Vagina (tissue), 2 donors: ENCODE measurements at regions of chr20 and their contacts with region 1.

Region 1: DNA sequence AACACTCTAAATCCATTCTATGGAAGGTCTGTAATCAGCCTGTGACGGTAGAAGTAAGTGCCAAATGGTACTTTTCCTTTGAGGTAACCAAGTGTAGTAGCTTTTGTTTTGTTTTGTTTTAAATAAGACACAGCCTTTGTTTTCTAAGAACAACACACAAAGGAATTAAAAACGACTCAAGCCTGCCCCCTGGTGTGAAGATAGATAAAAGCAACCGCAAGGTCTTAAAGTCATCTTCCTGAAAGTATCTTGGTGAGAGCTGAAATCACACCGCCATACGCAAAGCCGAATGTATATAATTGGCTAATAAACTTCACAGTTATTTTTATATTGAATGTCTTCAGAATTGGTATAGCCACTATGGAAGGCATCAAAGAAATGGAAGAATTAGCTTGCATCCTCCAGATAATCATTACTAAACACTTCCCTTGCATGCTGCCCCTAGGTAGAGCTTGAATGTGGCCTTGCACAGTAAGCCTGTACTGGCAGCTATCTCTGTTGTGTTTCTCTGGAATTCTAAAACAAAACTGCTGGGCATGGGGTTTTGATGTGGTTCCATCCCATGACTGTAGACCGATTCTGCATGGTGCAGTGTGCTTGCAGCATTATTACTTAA is 95.6 kb downstream of the LAMP5 start:
- DNase-seq: no peak
- H3K4me3 ChIP-seq: no peak overlapping the region
- H3K27ac ChIP-seq: no peak overlapping the region
- H3K4me1 ChIP-seq: no peaks in the 10 kb centered on the region
- H3K27me3 ChIP-seq: no peaks in the 10 kb centered on the region
- CTCF ChIP-seq: peak; percentile 62 to 75 (median 71)
- POLR2A ChIP-seq: no peak

Region 2: GRCh38 chr20:9363673-9364072 is 246.3 kb before region 1 on chr20:
- intact Hi-C with region 1: no loop called
- DNase-seq: no peak
- H3K4me3 ChIP-seq: no peak overlapping the region
- H3K27ac ChIP-seq: no peak overlapping the region
- H3K4me1 ChIP-seq: peaks cover 14% of the 10 kb centered on the region
- H3K27me3 ChIP-seq: no peaks in the 10 kb centered on the region
- CTCF ChIP-seq: no peak
- POLR2A ChIP-seq: no peak

Region 3: GRCh38 chr20:9407805-9408421 is 202.1 kb before region 1 on chr20:
- intact Hi-C with region 1: loop called (anchors 2 kb)
- DNase-seq: no peak
- H3K4me3 ChIP-seq: no peak overlapping the region
- H3K27ac ChIP-seq: no peak overlapping the region
- H3K4me1 ChIP-seq: no peaks in the 10 kb centered on the region
- H3K27me3 ChIP-seq: no peaks in the 10 kb centered on the region
- CTCF ChIP-seq: peak; percentile 76 to 86 (median 79)
- POLR2A ChIP-seq: no peak